ENCODE measurements at regions of chr18 and their contacts with region 1.

Region 1: DNA sequence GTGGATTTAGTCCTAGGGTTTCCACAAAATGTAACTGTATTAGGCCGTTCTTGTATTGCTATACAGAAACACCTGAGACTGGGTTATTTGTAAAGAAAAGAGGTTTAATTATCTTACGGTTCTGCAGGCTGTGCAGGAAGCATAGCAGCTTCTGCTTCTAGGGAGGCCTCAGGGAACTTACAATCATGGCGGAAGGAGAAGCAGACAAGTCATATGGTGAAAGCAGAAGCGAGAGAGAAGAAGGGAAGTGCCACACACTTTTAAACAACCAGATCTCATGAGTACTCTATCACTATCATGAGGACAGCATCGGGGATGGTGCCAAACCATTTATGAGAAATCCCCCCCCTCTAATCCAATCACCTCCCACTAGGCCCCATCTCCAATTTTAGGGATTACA is 9.5 kb upstream of the CCDC68 start:
- DNase-seq: no peak
- ATAC-seq: no peak
- H3K4me3 ChIP-seq: no peak overlapping the region
- H3K27ac ChIP-seq: peak overlapping the region; percentile 14
- H3K4me1 ChIP-seq: peaks cover 10% of the 10 kb centered on the region; the same call in 1 of the 2 replicates
- H3K27me3 ChIP-seq: no peaks in the 10 kb centered on the region
- CTCF ChIP-seq: no peak

Region 2: DNA sequence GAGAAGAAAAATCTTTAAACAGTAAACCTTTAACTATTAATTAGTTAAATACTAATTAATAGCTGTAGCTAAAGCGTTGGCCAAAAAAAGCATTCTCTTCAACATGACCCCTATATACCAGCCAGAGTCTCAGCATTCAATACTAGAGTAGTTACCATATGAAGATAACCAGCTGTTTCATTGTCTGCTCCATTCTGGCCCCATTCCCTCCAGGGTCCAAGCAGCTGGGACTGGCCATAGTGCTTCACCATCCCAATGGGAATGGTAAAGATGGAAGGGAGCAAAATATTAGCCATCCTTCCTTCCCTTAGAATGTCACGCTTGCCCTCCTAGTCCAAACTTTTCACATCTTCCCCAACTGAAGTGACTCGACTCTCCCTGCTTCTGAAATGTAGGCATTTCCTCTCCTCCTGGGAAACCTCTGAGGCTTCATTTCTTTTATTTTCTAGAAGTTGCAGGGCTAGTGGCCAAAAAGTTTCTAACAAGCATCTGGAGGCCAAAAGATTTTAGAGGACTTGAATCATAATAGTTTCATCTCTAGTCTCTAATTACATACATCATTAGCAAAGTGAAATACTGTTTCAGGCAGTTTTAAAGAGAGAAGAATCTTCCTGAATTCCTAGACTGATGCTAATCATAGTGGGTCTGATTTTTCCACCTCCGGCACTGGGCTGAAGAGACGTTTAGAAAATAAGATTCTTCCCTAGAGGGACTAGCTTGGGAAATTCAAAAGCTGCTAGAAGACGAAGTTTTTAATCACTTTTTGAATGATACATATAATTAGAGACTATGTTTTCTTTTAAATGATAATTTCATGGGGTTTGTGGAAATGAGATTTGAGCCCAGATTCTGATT is 62.2 kb before region 1 on chr18:
- CTCF ChIA-PET with region 1: no interaction called
- POLR2A ChIA-PET with region 1: interaction called, 16 read pairs
- intact Hi-C with region 1: no loop called
- DNase-seq: no peak
- ATAC-seq: no peak
- H3K4me3 ChIP-seq: no peak overlapping the region
- H3K27ac ChIP-seq: no peak overlapping the region
- H3K4me1 ChIP-seq: peaks cover 8% of the 10 kb centered on the region; the same call in 1 of the 2 replicates
- H3K27me3 ChIP-seq: no peaks in the 10 kb centered on the region
- CTCF ChIP-seq: no peak

Measured in PC-3 (cell line).